ENCODE measurements at regions of chr3 and their contacts with region 1.

Region 1: GRCh38 chr3:82240322-82240721 is 478.9 kb upstream of the GBE1 start:
- DNase-seq: no peak
- ATAC-seq: peak in 7 of 8 donors; percentile 28 to 87 (median 59)
- H3K4me3 ChIP-seq: no peak overlapping the region
- H3K27ac ChIP-seq: no peak overlapping the region
- H3K4me1 ChIP-seq: peaks cover 0 to 9% (median 0%) of the 10 kb centered on the region in 9 donors
- H3K27me3 ChIP-seq: no peaks in the 10 kb centered on the region
- CTCF ChIP-seq: no peak

Region 2: GRCh38 chr3:81581966-81582599 is 658.2 kb before region 1 on chr3:
- intact Hi-C with region 1: loop called in 1 of 10 experiments (anchors 10 kb)
- DNase-seq: no peak
- ATAC-seq: peak in 4 of 8 donors; percentile 44 to 61 (median 54)
- H3K4me3 ChIP-seq: no peak overlapping the region
- H3K27ac ChIP-seq: no peak overlapping the region
- H3K4me1 ChIP-seq: peaks cover 0 to 16% (median 6%) of the 10 kb centered on the region in 9 donors
- H3K27me3 ChIP-seq: no peaks in the 10 kb centered on the region
- CTCF ChIP-seq: peak in 8 of 9 donors; percentile 24 to 71 (median 60)

Region 3: DNA sequence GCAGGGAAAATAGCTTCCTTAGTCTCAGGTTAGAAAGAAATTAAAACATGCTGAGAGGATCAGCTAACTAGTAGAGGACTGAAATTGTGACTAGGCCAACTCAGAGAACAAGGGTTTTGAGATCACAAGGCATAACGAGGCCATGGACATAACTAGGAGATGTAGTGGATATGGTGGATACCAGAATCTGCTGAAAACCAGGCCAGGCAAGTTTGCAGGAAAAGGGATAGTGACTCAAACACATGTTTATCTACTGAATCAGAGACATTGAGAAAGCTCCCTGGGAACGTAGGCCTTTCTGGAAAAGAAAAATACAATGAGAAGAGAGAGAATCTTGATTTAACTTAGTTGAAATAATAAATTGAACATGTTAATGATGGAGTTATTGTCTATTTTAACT is 152.4 kb before region 1 on chr3:
- intact Hi-C with region 1: no loop called
- DNase-seq: no peak
- ATAC-seq: no peak
- H3K4me3 ChIP-seq: no peak overlapping the region
- H3K27ac ChIP-seq: peak overlapping the region in 1 of 10 donors; percentile 23
- H3K4me1 ChIP-seq: peaks cover 0 to 21% (median 8%) of the 10 kb centered on the region in 9 donors
- H3K27me3 ChIP-seq: no peaks in the 10 kb centered on the region
- CTCF ChIP-seq: no peak

Region 4: DNA sequence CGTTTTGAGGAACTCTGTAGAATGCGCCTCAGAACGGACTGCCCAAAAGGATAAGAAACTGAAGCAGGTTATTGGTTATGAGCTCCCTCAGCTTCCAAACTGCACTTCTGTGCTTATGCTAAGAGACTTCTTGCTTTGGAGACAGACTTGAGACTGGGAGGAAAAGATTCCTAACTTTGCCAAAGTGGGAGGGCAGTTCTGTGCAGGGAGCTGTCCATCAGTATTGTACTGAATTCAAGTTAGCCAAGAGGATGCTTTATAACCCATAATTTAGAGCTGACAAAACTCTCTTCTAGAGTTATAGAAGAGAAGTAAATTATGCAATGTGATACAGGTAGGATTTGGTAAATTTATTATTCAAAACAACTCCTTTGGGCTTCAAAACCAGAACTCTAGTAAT is 40.9 kb after region 1 on chr3:
- intact Hi-C with region 1: no loop called
- DNase-seq: no peak
- ATAC-seq: no peak
- H3K4me3 ChIP-seq: no peak overlapping the region
- H3K27ac ChIP-seq: no peak overlapping the region
- H3K4me1 ChIP-seq: no peaks in the 10 kb centered on the region
- H3K27me3 ChIP-seq: no peaks in the 10 kb centered on the region
- CTCF ChIP-seq: no peak